ENCODE measurements at regions of chr17 and their contacts with region 1.

Region 1: GRCh38 chr17:14308965-14309879 is 8.3 kb downstream of the HS3ST3B1 start:
- DNase-seq: peak; percentile 89 to 91
- ATAC-seq: peak; percentile 98 to 100 (median 98)
- H3K4me3 ChIP-seq: peak overlapping the region; percentile 26 to 66 (median 56)
- H3K27ac ChIP-seq: peak overlapping the region in 7 of 10 donors; percentile 19 to 74 (median 61)
- H3K4me1 ChIP-seq: peaks cover 2 to 49% (median 32%) of the 10 kb centered on the region in 9 donors
- H3K27me3 ChIP-seq: peaks cover 0 to 54% (median 46%) of the 10 kb centered on the region in 7 donors
- CTCF ChIP-seq: no peak

Region 2: DNA sequence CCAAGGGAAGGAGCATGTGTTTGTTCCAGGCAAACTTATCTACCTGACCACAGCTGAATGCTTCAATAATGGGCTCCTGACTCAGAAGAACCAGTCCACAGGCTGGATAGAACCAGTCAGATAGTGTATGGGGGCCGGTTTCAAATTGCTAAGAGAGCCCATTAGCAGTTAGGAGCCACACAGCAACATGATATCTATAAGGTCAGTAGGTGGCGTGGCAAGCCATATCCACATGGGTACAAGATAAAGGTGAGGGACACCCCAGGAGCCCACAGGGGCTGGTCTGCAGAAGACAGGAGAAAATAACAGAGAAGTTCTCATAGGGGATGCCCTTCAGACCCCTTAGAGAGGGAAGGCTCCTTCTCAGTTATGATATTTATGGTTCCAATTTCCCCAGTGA is 41.0 kb before region 1 on chr17:
- intact Hi-C with region 1: no loop called
- DNase-seq: no peak
- ATAC-seq: no peak
- H3K4me3 ChIP-seq: no peak overlapping the region
- H3K27ac ChIP-seq: no peak overlapping the region
- H3K4me1 ChIP-seq: no peaks in the 10 kb centered on the region
- H3K27me3 ChIP-seq: peaks cover 0 to 8% (median 0%) of the 10 kb centered on the region in 7 donors
- CTCF ChIP-seq: peak in 1 of 9 donors; percentile 11

Region 3: DNA sequence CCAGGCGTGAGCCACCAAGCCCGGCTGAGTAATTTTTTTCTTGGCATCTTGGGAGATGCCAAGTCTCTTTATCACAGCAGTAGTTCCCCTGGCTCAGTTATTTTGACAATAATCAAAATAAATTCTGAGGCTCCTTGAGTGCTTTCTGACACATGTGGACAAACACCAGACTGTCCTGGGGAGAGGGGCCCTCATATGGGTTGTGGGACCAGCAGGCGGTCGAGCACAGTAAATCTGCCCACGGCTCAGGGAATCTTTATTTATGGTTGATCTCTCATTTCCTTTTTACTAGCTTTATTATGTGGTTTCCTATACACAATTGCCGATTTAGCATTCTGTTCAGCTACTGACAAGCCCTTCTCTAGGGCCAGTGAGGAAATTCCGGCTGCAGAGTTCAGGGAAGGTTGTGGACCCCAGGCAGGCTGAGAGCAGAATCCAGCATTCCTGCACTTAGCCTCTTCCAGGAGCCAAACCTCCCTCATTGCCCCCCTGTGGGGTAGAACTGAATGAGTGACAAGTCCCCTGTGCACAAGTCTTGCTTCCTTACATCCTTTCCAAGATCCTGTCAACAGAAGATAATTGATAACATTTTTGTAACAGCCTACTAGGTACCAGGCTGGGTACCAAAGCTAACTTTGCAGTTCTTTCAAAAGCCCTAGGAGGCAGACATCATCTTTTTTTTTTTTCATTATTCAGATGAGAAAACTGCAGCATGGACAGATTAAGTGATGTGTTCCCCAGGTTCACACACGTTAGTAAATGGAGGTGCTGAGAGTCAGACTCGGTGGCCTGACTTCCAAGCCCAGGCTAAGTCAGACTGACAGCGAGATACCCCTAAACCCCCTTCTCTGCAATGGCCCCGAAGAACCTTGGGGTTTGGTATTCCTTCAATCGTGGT is 31.9 kb after region 1 on chr17:
- intact Hi-C with region 1: loop called in 1 of 10 experiments (anchors 1 kb)
- DNase-seq: no peak
- ATAC-seq: no peak
- H3K4me3 ChIP-seq: no peak overlapping the region
- H3K27ac ChIP-seq: no peak overlapping the region
- H3K4me1 ChIP-seq: peaks cover 0 to 15% (median 0%) of the 10 kb centered on the region in 9 donors
- H3K27me3 ChIP-seq: peaks cover 0 to 14% (median 0%) of the 10 kb centered on the region in 7 donors
- CTCF ChIP-seq: no peak